B cell (primary cell): ENCODE measurements at regions of chr10 and their contacts with region 1.

Region 1: DNA sequence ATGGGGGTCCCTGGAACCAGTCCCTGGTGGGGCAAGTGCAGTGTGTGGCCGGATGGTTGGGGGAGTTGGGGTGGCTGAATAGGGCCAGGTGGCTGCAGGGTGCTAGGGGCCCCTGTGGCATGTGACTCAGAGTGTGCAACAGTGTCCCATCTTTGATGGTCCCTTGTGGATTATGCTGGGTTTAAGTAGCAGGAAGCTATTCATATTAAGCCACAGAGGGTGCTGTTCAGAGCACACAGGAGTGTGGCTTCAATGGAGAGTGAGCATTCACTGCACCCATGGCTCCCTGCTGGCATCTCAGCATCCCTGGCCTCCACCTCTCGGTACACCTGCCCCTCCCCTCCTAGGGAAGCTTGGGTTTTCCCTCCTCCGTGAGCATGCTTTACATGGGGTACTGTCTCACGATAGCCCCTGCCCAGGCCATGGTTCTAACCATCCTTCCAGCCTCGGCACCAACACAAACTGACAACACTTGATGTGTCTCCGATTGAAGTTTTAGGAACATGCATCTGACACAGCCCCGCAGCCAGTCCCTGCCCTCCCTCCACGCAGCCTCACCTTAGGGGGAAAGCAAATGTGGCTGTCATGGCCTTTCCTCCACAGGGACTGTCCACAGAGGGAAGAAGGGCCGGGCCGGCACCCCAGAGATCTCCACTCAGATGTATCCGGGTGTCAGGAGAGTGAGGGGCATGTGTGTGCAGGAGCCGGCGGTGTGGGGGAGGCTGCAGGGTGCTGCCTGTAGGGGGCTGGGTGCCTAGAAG is 30.4 kb upstream of the PPIF start:
- DNase-seq: peak; percentile 33
- ATAC-seq: peak; percentile 78
- H3K4me3 ChIP-seq: no peak overlapping the region
- H3K4me3 Mint-ChIP-seq: peak overlapping the region; percentile 73
- H3K27ac ChIP-seq: no peak overlapping the region
- H3K27ac Mint-ChIP-seq: peak overlapping the region; percentile 51
- H3K4me1 ChIP-seq: peaks cover 17 to 21% of the 10 kb centered on the region in 2 donors
- H3K4me1 Mint-ChIP-seq: peaks cover 33% of the 10 kb centered on the region
- H3K27me3 ChIP-seq: no peaks in the 10 kb centered on the region
- H3K27me3 Mint-ChIP-seq: no peaks in the 10 kb centered on the region
- CTCF ChIP-seq: no peak

Region 2: GRCh38 chr10:79331709-79332108 is 14.9 kb after region 1 on chr10:
- CTCF ChIA-PET with region 1: interaction called, 9 read pairs
- POLR2A ChIA-PET with region 1: interaction called, 4 read pairs
- intact Hi-C with region 1: loop called (anchors 1 kb)
- DNase-seq: peak; percentile 87
- ATAC-seq: peak; percentile 93
- H3K4me3 ChIP-seq: no peak overlapping the region
- H3K4me3 Mint-ChIP-seq: peak overlapping the region; percentile 57
- H3K27ac ChIP-seq: no peak overlapping the region
- H3K27ac Mint-ChIP-seq: peak overlapping the region; percentile 71
- H3K4me1 ChIP-seq: peaks cover 8 to 13% of the 10 kb centered on the region in 2 donors
- H3K4me1 Mint-ChIP-seq: peaks cover 20% of the 10 kb centered on the region
- H3K27me3 ChIP-seq: no peaks in the 10 kb centered on the region
- H3K27me3 Mint-ChIP-seq: no peaks in the 10 kb centered on the region
- CTCF ChIP-seq: no peak